AG04449 (cell line): ENCODE measurements at regions of chr1 and their contacts with region 1.

Region 1: DNA sequence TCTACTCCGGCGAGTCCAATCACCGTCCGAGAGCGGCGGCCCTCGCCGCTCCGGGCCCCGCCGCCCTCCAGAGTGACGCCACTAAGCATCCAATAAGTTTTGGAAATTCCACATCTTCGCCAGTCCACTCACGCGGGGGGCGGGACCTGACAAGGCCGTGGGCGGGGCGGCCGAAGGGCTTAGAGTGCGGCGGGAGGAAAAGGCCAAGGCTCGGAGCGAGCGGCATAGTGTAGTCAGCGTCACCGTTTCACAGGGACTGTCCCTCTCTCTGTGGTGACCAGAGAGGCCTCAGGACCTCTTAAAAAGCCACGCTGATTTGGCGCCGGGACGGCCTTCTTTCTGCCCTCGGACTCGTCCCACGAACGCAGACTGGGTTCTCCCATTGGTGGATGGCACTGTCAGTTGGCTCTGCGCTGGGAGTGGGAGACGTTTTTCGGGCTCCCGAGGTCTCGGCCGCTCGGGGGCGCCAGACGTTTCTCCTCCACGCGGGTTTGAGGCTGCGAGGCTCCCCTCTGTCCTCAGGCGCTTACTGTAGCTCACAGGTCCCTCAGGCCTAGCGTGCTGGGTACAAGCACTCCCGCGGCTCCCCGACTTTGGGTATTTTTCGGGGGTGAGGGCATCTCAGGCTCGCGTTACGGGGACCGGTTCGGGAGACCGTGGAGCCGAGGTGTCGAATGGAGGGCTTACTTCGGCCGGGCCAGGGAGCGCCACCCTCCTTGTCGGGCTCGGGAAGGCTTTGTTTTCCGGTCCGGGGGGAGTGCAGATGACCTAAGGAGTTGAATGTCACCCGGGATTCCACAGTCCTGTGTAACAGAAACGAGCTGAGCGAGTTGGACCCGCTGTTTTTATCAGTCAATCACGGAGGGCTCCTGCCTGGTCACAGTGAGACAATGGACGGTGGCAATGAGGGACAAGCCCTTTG is 488 bp upstream of the TRIM45 start:
- DNase-seq: peak; percentile 77
- H3K4me3 ChIP-seq: peak overlapping the region; percentile 93
- CTCF ChIP-seq: peak; percentile 91

Region 2: DNA sequence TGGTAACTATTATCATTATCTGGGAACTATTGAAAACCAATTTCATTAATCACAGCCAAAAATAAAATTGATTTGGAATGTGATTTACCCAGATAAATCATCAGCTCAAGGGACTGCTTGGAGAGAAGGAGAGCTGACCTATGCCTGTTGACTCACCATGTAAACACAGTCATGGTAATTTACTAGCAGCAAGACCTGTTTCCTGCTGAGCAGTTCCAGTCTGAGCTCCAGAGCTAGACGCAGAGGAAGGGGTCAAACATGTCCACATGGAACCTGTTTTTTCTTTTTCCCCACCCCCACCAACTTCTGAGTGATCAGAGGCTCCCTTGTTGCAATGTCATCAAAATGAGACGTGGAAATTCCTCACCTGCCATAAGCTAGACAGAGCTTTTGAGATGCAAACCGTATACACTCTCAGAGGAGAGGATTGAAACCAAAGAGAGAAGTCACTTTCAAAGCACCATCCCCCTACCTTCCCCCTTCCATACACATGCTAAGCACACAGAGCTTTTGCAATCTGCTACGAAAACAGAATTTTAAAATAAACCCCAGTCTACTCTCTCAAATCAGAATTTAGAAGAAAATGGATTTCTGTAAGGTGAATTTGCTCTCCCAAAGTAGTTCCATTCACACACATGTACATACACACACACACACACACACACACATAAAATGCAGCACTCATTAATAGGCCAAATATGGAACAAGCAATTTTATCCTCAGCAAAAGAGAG is 268.2 kb before region 1 on chr1:
- CTCF ChIA-PET with region 1: no interaction called
- POLR2A ChIA-PET with region 1: no interaction called
- DNase-seq: peak; percentile 41
- H3K4me3 ChIP-seq: no peak overlapping the region
- CTCF ChIP-seq: no peak

Region 3: GRCh38 chr1:117093870-117094621 is 28.0 kb before region 1 on chr1:
- CTCF ChIA-PET with region 1: interaction called, 171 read pairs
- POLR2A ChIA-PET with region 1: no interaction called
- DNase-seq: no peak
- H3K4me3 ChIP-seq: no peak overlapping the region
- CTCF ChIP-seq: peak; percentile 28

Region 4: GRCh38 chr1:117106478-117106877 is 15.6 kb before region 1 on chr1:
- CTCF ChIA-PET with region 1: interaction called, 11 read pairs
- POLR2A ChIA-PET with region 1: no interaction called
- DNase-seq: no peak
- H3K4me3 ChIP-seq: no peak overlapping the region
- CTCF ChIP-seq: no peak

Region 5: GRCh38 chr1:117137316-117137855 is 15.3 kb after region 1 on chr1:
- CTCF ChIA-PET with region 1: interaction called, 39 read pairs
- POLR2A ChIA-PET with region 1: no interaction called
- DNase-seq: no peak
- H3K4me3 ChIP-seq: no peak overlapping the region
- CTCF ChIP-seq: no peak